ENCODE measurements at regions of chr4 and their contacts with region 1.

Region 1: DNA sequence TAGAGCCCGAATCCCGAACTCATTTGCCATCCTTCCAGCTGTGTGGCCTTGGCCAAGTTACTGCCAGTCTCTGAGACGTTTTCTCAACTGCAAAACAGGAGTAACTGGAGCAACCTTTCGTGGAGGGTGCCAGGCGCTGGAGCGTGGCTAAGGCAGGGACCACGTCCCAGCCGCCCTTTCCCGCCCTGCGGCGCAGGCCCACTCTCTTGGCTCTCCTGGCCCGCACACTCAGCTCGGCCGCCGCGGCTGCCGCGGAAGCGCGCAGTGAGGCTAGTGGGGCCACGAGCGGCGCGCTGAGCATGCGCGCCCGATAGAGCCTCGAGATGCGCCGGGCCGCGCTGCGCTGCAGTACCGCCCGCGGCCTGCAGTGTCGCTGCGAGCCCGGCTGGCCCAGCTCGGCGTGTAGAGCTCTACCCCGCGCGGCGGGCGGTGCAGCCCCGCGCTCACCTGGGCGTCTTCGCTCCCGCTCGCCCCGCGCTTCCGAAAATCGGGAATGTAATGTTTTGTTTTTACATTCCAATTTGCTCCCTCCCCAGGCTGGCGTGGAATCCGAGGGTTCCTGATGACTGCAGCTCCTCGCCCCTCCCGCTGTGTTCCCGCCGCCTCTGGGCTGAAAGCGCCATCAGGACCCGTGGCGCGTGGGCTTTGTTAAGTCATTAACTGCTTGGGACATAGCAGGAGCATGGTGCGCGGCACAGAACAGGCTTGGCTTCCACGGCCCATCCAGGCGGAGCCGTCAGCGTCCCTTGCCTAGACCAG is 4.0 kb upstream of the ZNF518B start:
- DNase-seq: peak; percentile 63 to 81 (median 79)
- H3K4me3 ChIP-seq: peak overlapping the region; percentile 55
- H3K4me3 Mint-ChIP-seq: peak overlapping the region; percentile 73 to 86 (median 82)
- H3K27ac ChIP-seq: no peak overlapping the region
- H3K27ac Mint-ChIP-seq: peak overlapping the region in 5 of 8 donors; percentile 7 to 88 (median 54)
- H3K4me1 ChIP-seq: peaks cover 19% of the 10 kb centered on the region
- H3K4me1 Mint-ChIP-seq: peaks cover 29 to 43% (median 39%) of the 10 kb centered on the region in 3 donors
- H3K27me3 ChIP-seq: no peaks in the 10 kb centered on the region
- H3K27me3 Mint-ChIP-seq: peaks cover 13 to 37% of the 10 kb centered on the region in 2 donors

Region 2: GRCh38 chr4:10478621-10479020 is 17.4 kb after region 1 on chr4:
- CTCF ChIA-PET with region 1: interaction called, 17 read pairs
- POLR2A ChIA-PET with region 1: no interaction called
- DNase-seq: no peak
- H3K4me3 ChIP-seq: no peak overlapping the region
- H3K4me3 Mint-ChIP-seq: no peak overlapping the region
- H3K27ac ChIP-seq: no peak overlapping the region
- H3K27ac Mint-ChIP-seq: no peak overlapping the region
- H3K4me1 ChIP-seq: no peaks in the 10 kb centered on the region
- H3K4me1 Mint-ChIP-seq: no peaks in the 10 kb centered on the region
- H3K27me3 ChIP-seq: no peaks in the 10 kb centered on the region
- H3K27me3 Mint-ChIP-seq: peaks cover 10 to 25% of the 10 kb centered on the region in 2 donors

Region 3: DNA sequence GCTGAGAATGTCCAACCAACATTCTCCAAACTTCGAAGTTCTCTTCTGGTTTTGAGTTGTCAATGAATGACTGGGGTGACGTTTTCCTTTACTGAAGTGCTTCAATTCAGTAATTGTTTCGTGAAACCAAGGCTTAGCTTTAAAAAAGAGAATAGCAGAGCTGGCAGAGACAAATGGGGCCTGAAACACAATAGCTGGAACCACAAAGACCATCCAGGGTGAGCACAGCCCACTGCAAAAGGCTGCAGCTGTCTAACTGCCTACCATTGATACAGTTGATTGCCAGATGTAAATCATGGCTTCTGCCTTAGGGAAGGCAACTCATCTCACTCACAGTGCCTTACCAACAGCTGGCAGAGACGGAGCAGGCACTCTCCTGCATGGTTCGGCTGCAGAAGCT is 74.6 kb after region 1 on chr4:
- CTCF ChIA-PET with region 1: interaction called, 11 read pairs
- POLR2A ChIA-PET with region 1: no interaction called
- DNase-seq: no peak
- H3K4me3 ChIP-seq: no peak overlapping the region
- H3K4me3 Mint-ChIP-seq: no peak overlapping the region
- H3K27ac ChIP-seq: no peak overlapping the region
- H3K27ac Mint-ChIP-seq: no peak overlapping the region
- H3K4me1 ChIP-seq: no peaks in the 10 kb centered on the region
- H3K4me1 Mint-ChIP-seq: no peaks in the 10 kb centered on the region
- H3K27me3 ChIP-seq: no peaks in the 10 kb centered on the region
- H3K27me3 Mint-ChIP-seq: peaks cover 8 to 35% of the 10 kb centered on the region in 2 donors

Region 4: GRCh38 chr4:10554694-10555093 is 93.4 kb after region 1 on chr4:
- CTCF ChIA-PET with region 1: interaction called, 11 read pairs
- POLR2A ChIA-PET with region 1: no interaction called
- DNase-seq: peak in 4 of 5 donors; percentile 6 to 26 (median 14)
- H3K4me3 ChIP-seq: no peak overlapping the region
- H3K4me3 Mint-ChIP-seq: no peak overlapping the region
- H3K27ac ChIP-seq: no peak overlapping the region
- H3K27ac Mint-ChIP-seq: no peak overlapping the region
- H3K4me1 ChIP-seq: no peaks in the 10 kb centered on the region
- H3K4me1 Mint-ChIP-seq: peaks cover 3 to 6% (median 4%) of the 10 kb centered on the region in 3 donors
- H3K27me3 ChIP-seq: peaks cover 3% of the 10 kb centered on the region
- H3K27me3 Mint-ChIP-seq: peaks cover 2 to 47% of the 10 kb centered on the region in 2 donors